Sigmoid colon (tissue), 7 donors: ENCODE measurements at regions of chr19 and their contacts with region 1.

Region 1: GRCh38 chr19:45692187-45693105 is at the start of gene QPCTL:
- DNase-seq: peak; percentile 99
- H3K4me3 ChIP-seq: peak within 1 kb of the TSS; percentile 62 to 91 (median 82)
- H3K27ac ChIP-seq: peak within 1 kb of the TSS; percentile 93 to 95 (median 94)
- H3K4me1 ChIP-seq: peaks cover 0 to 24% (median 16%) of the 10 kb centered on the region in 4 donors
- H3K27me3 ChIP-seq: no peaks in the 10 kb centered on the region
- CTCF ChIP-seq: no peak
- EP300 ChIP-seq: peak in 2 of 4 donors; percentile 21 to 42
- POLR2A ChIP-seq: peak; percentile 48 to 56
- total RNA-seq, gene QPCTL: 2.1 to 4.7 (median 3.4) TPM

Region 2: DNA sequence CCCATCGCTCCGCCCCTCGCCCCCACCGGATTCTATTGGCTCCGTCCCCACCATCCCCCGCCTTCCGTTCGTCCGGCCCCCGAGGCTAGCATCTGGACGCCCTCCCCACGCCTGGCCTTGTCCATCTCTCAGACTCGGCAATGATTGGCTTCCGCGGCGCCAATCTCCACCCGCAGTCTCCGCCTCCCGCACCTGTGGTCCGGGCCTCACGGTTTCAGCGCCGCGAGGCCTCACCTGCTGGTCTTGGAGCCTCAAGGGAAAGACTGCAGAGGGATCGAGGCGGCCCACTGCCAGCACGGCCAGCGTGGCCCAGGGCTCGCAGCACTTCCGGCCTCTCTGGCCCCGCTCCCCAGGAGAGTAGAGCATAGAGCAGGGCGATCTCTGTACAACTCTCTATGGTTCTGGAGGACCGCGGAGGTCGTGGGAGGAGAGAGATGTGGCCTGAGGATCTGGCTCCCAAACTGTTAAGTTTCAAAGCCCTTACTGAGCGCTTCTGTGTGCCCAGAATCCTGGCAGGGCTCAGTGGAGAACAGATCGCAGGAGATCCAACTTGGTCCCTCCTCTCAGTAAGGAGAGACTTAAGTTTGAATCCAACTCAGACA is 268.8 kb before region 1 on chr19 and contains the start of gene ERCC1:
- intact Hi-C with region 1: loop called (anchors 10 kb)
- DNase-seq: peak; percentile 98
- H3K4me3 ChIP-seq: peak within 1 kb of the TSS; percentile 55 to 73 (median 61)
- H3K27ac ChIP-seq: peak within 1 kb of the TSS; percentile 80 to 92 (median 90)
- H3K4me1 ChIP-seq: peaks cover 0 to 41% (median 23%) of the 10 kb centered on the region in 4 donors
- H3K27me3 ChIP-seq: no peaks in the 10 kb centered on the region
- CTCF ChIP-seq: no peak
- EP300 ChIP-seq: no peak
- POLR2A ChIP-seq: peak; percentile 28 to 73
- total RNA-seq, gene ERCC1: 41.8 to 67.0 (median 64.4) TPM

Region 3: GRCh38 chr19:45717166-45717982 is 24.9 kb after region 1 on chr19:
- intact Hi-C with region 1: loop called (anchors 1 kb)
- DNase-seq: peak; percentile 100
- H3K4me3 ChIP-seq: peak overlapping the region; percentile 60 to 82 (median 69)
- H3K27ac ChIP-seq: peak overlapping the region; percentile 87 to 95 (median 88)
- H3K4me1 ChIP-seq: peaks cover 0 to 19% (median 17%) of the 10 kb centered on the region in 4 donors
- H3K27me3 ChIP-seq: no peaks in the 10 kb centered on the region
- CTCF ChIP-seq: peak in 1 of 4 experiments; percentile 29
- EP300 ChIP-seq: peak in 1 of 4 donors; percentile 79
- POLR2A ChIP-seq: peak; percentile 32 to 37

Region 4: DNA sequence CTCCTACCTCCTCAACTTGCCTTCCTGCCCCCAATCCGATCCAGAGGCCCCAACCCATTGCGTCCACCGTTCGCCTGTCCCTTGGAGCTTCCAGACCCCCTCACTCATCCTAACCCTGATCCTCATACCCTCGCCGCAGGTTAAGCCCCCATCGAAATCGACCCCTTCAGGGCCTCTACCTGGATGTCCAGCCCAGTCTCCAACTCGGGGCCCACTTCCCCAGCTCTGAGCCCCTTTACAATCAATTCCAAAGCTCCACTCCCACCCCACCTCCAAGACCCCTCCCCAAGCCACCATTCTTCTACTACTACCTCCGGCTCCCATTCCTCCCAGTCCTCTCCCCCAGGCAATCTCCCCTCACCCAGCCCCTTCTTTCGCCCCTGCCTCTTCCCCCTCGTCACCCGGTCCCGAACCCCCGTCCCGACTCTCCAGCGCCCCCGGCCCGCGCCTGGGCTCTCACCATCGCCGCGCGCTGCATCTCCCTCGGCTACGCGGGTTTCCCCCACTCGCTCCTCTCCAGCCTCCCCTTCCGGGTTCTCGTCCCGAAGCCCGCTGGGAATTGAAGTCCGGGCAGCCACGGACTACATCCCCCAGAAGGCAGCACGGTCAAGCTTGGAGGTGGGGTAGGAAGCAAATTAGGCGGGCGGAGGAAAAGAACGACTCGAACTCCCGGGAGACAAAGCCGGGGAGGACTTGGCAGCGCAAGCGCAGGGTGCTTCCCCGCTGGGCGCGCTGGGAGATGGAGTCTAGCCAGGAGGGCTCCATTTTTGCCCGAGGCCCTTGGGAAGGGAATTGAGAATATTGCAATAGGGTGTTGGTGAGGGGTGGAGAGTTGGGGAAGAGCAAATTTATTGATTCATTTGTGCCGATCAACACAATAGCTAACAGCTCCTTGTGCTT is 38.2 kb after region 1 on chr19 and contains the start of gene FBXO46:
- intact Hi-C with region 1: loop called (anchors 2 kb)
- DNase-seq: peak; percentile 99
- H3K4me3 ChIP-seq: peak within 1 kb of the TSS; percentile 87 to 91 (median 88)
- H3K27ac ChIP-seq: peak within 1 kb of the TSS; percentile 76 to 87 (median 84)
- H3K4me1 ChIP-seq: peaks cover 0 to 25% (median 20%) of the 10 kb centered on the region in 4 donors
- H3K27me3 ChIP-seq: no peaks in the 10 kb centered on the region
- CTCF ChIP-seq: no peak
- EP300 ChIP-seq: peak in 1 of 4 donors; percentile 51
- POLR2A ChIP-seq: peak; percentile 75 to 86
- total RNA-seq, gene FBXO46: 7.1 to 9.7 (median 8.8) TPM

Region 5: DNA sequence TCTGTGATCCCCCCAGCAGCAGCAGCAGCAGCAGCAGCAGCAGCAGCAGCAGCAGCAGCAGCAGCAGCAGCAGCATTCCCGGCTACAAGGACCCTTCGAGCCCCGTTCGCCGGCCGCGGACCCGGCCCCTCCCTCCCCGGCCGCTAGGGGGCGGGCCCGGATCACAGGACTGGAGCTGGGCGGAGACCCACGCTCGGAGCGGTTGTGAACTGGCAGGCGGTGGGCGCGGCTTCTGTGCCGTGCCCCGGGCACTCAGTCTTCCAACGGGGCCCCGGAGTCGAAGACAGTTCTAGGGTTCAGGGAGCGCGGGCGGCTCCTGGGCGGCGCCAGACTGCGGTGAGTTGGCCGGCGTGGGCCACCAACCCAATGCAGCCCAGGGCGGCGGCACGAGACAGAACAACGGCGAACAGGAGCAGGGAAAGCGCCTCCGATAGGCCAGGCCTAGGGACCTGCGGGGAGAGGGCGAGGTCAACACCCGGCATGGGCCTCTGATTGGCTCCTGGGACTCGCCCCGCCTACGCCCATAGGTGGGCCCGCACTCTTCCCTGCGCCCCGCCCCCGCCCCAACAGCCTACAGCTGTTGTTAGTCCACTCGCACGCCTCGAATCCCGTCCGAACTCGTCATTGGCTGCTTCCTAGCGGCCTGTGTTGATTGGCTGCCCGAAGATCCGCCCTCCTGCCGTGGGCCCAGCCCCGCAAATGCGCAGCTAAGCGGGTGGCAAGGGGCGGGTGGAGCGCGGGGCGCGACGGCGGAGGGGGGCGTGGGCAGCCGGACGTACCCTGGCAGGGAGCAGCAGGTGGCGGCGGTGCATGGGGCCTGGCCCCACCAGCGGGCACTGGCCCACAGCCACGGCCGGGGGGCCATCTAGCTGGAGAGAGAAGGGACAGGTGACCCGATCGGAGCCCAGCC is 78.0 kb after region 1 on chr19:
- intact Hi-C with region 1: loop called (anchors 2 kb)
- DNase-seq: peak; percentile 99
- H3K4me3 ChIP-seq: peak overlapping the region; percentile 47 to 93 (median 84)
- H3K27ac ChIP-seq: peak overlapping the region; percentile 89 to 99 (median 98)
- H3K4me1 ChIP-seq: peaks cover 3 to 47% (median 33%) of the 10 kb centered on the region in 4 donors
- H3K27me3 ChIP-seq: no peaks in the 10 kb centered on the region
- CTCF ChIP-seq: peak; percentile 85 to 94 (median 94)
- EP300 ChIP-seq: no peak
- POLR2A ChIP-seq: peak; percentile 27 to 43

Region 6: DNA sequence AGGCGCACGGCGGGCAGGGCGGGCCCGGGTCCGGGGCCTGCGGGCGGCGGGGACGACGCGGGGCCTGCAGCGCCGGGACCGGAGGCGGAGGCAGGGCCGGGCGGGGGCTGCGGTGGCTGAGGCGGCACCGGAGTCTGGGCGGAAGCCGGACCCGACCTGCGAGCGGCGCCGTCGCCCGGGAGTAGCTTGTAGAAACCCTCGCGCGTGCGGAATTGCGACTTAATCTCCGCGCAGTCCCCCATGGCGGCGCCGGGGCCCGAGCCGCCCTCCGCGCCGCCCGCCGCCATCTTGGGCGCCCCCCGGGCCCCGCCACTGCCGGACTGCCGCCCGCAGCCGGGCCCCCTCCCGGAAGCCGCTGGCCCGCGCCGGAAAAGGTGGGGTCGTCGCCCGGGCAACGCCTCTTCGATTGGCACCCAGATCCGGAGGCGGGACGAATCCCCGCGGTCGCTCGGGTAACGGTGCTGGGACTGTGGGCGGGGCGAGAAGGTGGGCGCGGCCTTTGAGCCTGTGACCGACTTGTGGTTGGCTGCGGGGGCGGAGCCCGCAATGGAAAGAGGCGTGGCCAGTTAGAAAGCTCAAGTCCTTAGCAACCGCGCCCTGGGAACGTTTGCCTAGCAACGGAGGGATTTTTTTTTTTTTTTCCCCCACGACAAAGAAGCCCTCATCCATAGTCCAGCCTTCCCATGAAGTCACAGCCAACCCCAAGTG is 100.2 kb after region 1 on chr19 and contains the start of gene DMWD:
- intact Hi-C with region 1: loop called (anchors 5 kb)
- DNase-seq: peak; percentile 100
- H3K4me3 ChIP-seq: peak within 1 kb of the TSS; percentile 56 to 86 (median 74)
- H3K27ac ChIP-seq: peak within 1 kb of the TSS; percentile 72 to 92 (median 83)
- H3K4me1 ChIP-seq: peaks cover 0 to 23% (median 19%) of the 10 kb centered on the region in 4 donors
- H3K27me3 ChIP-seq: no peaks in the 10 kb centered on the region
- CTCF ChIP-seq: no peak
- EP300 ChIP-seq: no peak
- POLR2A ChIP-seq: no peak
- total RNA-seq, gene DMWD: 21.1 to 59.5 (median 36.8) TPM